ENCODE measurements at regions of chr14 and their contacts with region 1.

Region 1: DNA sequence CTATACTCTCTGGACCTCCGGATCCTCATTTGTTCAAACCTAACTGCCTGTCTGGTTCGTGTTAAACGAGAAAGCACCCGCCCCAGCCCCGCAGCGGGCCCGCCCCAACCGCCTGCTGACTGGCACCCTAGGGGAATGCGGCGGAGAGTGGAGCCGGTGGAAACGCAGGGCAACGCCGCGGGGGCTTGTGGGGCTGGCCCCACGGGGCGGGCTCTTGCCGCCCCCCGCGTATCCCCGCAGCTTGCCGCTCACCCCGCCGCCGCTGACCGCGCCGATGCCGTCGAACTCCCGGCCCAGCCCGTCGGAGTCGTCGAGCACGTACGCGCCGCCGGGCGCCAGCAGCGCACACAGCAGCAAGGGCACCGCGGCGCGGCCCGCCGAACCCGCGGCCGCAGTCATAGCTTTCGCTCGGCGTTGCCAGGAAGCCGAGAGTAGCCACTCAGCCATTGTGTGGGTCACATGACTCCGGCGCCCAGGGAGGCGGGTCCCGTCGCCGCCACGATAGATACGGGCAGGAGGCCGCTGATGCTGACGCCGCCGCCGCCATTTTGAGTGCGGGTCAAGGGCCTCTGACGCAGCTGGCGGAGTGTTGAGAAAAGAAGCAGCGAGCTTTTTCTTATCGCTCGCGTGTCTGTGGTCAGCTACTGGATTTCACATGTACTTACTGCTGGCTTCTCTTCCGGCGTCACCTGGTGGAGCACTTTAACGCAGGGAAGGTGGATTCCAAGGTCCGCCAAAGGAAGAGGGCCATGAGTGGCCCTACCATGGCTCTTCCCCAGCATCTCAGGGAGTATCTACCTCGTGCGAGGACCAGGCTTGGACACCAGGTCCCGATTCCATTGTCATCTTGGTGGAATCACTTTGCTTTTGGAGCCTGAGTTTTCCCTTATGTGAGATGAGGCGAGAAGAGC is at the start of gene GALC:
- DNase-seq: peak; percentile 92 to 98 (median 94)
- ATAC-seq: peak; percentile 85
- H3K4me3 ChIP-seq: peak within 1 kb of the TSS; percentile 66
- H3K4me3 Mint-ChIP-seq: peak within 1 kb of the TSS; percentile 92
- H3K27ac ChIP-seq: peak within 1 kb of the TSS; percentile 88 to 95
- H3K27ac Mint-ChIP-seq: peak within 1 kb of the TSS; percentile 99
- H3K4me1 ChIP-seq: peaks cover 41% of the 10 kb centered on the region
- H3K4me1 Mint-ChIP-seq: peaks cover 76% of the 10 kb centered on the region
- H3K27me3 ChIP-seq: no peaks in the 10 kb centered on the region
- H3K27me3 Mint-ChIP-seq: no peaks in the 10 kb centered on the region
- CTCF ChIP-seq: no peak
- total RNA-seq, gene GALC: 14.7 to 14.9 TPM

Region 2: GRCh38 chr14:87952307-87953094 is 40.5 kb before region 1 on chr14:
- CTCF ChIA-PET with region 1: no interaction called
- POLR2A ChIA-PET with region 1: interaction called, 49 read pairs
- intact Hi-C with region 1: loop called (anchors 5 kb)
- DNase-seq: peak in 4 of 14 experiments; percentile 3 to 81 (median 37)
- ATAC-seq: peak; percentile 71
- H3K4me3 ChIP-seq: peak overlapping the region; percentile 13
- H3K4me3 Mint-ChIP-seq: peak overlapping the region; percentile 59
- H3K27ac ChIP-seq: peak overlapping the region; percentile 32 to 64
- H3K27ac Mint-ChIP-seq: peak overlapping the region; percentile 93
- H3K4me1 ChIP-seq: peaks cover 2% of the 10 kb centered on the region
- H3K4me1 Mint-ChIP-seq: peaks cover 60% of the 10 kb centered on the region
- H3K27me3 ChIP-seq: no peaks in the 10 kb centered on the region
- H3K27me3 Mint-ChIP-seq: no peaks in the 10 kb centered on the region
- CTCF ChIP-seq: no peak

Region 3: GRCh38 chr14:88013750-88014349 is 20.9 kb after region 1 on chr14:
- CTCF ChIA-PET with region 1: interaction called, 9 read pairs
- POLR2A ChIA-PET with region 1: interaction called, 27 read pairs
- intact Hi-C with region 1: no loop called
- DNase-seq: peak in 10 of 14 experiments; percentile 7 to 74 (median 26)
- ATAC-seq: peak; percentile 52
- H3K4me3 ChIP-seq: no peak overlapping the region
- H3K4me3 Mint-ChIP-seq: no peak overlapping the region
- H3K27ac ChIP-seq: no peak overlapping the region
- H3K27ac Mint-ChIP-seq: peak overlapping the region; percentile 70
- H3K4me1 ChIP-seq: peaks cover 15% of the 10 kb centered on the region
- H3K4me1 Mint-ChIP-seq: peaks cover 78% of the 10 kb centered on the region
- H3K27me3 ChIP-seq: no peaks in the 10 kb centered on the region
- H3K27me3 Mint-ChIP-seq: no peaks in the 10 kb centered on the region
- CTCF ChIP-seq: peak; percentile 62

Region 4: DNA sequence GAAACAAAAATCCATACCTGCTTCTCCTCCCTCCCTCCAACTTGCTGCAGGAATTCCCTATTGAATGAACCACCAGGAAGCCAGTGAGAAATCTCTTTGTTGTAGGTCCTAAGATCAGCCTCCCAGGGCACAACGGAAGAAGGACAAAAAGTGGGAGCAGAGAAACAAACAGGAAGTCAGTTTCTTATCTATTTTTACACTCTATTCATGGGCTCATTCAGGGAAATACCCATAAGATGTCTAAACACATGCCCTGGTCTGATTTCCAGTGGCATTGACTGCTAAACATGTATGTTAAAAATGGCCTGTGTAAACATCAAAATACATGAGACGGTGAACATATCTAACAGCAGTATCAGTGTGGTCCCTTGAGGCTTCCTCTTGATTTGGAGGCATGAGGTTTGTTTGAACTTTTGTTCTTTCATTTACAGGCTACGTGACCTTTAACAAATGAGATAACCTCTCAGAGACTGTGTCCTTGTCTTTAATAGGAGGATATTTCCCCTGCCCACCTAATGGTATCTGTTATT is 30.8 kb after region 1 on chr14:
- CTCF ChIA-PET with region 1: no interaction called
- POLR2A ChIA-PET with region 1: interaction called, 19 read pairs
- intact Hi-C with region 1: no loop called
- DNase-seq: peak in 3 of 14 experiments; percentile 43 to 63 (median 46)
- ATAC-seq: peak; percentile 51
- H3K4me3 ChIP-seq: no peak overlapping the region
- H3K4me3 Mint-ChIP-seq: no peak overlapping the region
- H3K27ac ChIP-seq: no peak overlapping the region
- H3K27ac Mint-ChIP-seq: peak overlapping the region; percentile 48
- H3K4me1 ChIP-seq: peaks cover 38% of the 10 kb centered on the region
- H3K4me1 Mint-ChIP-seq: peaks cover 93% of the 10 kb centered on the region
- H3K27me3 ChIP-seq: no peaks in the 10 kb centered on the region
- H3K27me3 Mint-ChIP-seq: no peaks in the 10 kb centered on the region
- CTCF ChIP-seq: no peak

Region 5: GRCh38 chr14:88168498-88169165 is 175.7 kb after region 1 on chr14:
- CTCF ChIA-PET with region 1: interaction called, 4 read pairs
- POLR2A ChIA-PET with region 1: interaction called, 10 read pairs
- intact Hi-C with region 1: loop called in 1 of 2 experiments (anchors 5 kb)
- DNase-seq: peak; percentile 30 to 80 (median 45)
- ATAC-seq: peak; percentile 98
- H3K4me3 ChIP-seq: no peak overlapping the region
- H3K4me3 Mint-ChIP-seq: no peak overlapping the region
- H3K27ac ChIP-seq: no peak overlapping the region
- H3K27ac Mint-ChIP-seq: no peak overlapping the region
- H3K4me1 ChIP-seq: peaks cover 6% of the 10 kb centered on the region
- H3K4me1 Mint-ChIP-seq: no peaks in the 10 kb centered on the region
- H3K27me3 ChIP-seq: peaks cover 0 to 10% of the 10 kb centered on the region in 2 experiments
- H3K27me3 Mint-ChIP-seq: peaks cover 23% of the 10 kb centered on the region
- CTCF ChIP-seq: peak; percentile 76

Measured in CD4-positive, alpha-beta T cell (primary cell).